CD4-positive, alpha-beta memory T cell (primary cell): ENCODE measurements at regions of chr7 and their contacts with region 1.

Region 1: GRCh38 chr7:75914730-75915585 is at the start of gene POR:
- DNase-seq: peak; percentile 94 to 100 (median 98)
- H3K4me3 ChIP-seq: peak within 1 kb of the TSS; percentile 79 to 81
- H3K4me3 Mint-ChIP-seq: peak within 1 kb of the TSS; percentile 91 to 95 (median 94)
- H3K27ac ChIP-seq: peak within 1 kb of the TSS; percentile 97
- H3K27ac Mint-ChIP-seq: peak within 1 kb of the TSS; percentile 92 to 98 (median 97)
- H3K4me1 ChIP-seq: peaks cover 34% of the 10 kb centered on the region
- H3K4me1 Mint-ChIP-seq: peaks cover 21 to 46% (median 35%) of the 10 kb centered on the region in 4 donors
- H3K27me3 ChIP-seq: no peaks in the 10 kb centered on the region
- H3K27me3 Mint-ChIP-seq: no peaks in the 10 kb centered on the region
- total RNA-seq, gene POR: 60.2 to 71.1 TPM

Region 2: GRCh38 chr7:75835688-75836285 is 79.2 kb before region 1 on chr7:
- CTCF ChIA-PET with region 1: no interaction called
- POLR2A ChIA-PET with region 1: no interaction called
- intact Hi-C with region 1: no loop called
- DNase-seq: no peak
- H3K4me3 ChIP-seq: no peak overlapping the region
- H3K4me3 Mint-ChIP-seq: no peak overlapping the region
- H3K27ac ChIP-seq: no peak overlapping the region
- H3K27ac Mint-ChIP-seq: no peak overlapping the region
- H3K4me1 ChIP-seq: no peaks in the 10 kb centered on the region
- H3K4me1 Mint-ChIP-seq: no peaks in the 10 kb centered on the region
- H3K27me3 ChIP-seq: no peaks in the 10 kb centered on the region
- H3K27me3 Mint-ChIP-seq: peaks cover 0 to 1% of the 10 kb centered on the region in 2 donors

Region 3: DNA sequence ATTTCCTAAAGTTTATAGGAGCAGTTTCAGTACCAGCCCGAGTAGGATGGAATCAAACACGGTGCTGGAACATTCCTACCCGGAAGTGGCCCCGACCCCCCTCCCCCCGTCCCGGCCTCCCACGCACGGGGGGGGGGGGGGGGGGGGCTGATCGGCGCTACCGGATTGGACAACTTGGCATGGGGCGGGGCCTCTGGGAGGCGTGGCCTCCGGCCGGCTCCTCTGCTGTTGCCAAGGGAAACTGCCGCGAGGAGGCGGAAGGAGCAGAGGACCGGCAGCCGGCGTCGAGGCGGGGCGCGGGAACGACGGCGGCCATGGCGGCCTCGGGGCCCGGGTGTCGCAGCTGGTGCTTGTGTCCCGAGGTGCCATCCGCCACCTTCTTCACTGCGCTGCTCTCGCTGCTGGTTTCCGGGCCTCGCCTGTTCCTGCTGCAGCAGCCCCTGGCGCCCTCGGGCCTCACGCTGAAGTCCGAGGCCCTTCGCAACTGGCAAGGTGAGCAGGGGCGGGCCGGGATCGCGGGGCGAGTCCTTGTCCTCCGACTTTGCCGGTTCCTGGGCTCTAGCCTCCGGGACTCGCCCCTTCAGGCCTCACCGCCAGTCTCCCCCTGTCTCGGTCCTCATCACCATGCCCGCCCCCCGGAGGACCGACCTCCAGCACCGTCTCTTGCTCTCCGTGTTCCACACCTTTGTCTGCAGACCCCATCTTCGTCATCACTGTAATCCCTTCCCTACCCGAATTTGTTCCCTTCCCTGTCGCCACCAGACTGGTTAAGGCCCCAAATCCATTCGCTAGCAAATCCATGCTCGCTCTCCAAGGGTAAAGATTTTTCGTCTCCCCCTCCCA is 36.0 kb before region 1 on chr7 and contains the start of gene RHBDD2:
- CTCF ChIA-PET with region 1: interaction called, 3 read pairs
- POLR2A ChIA-PET with region 1: interaction called, 62 read pairs
- intact Hi-C with region 1: loop called (anchors 1 kb)
- DNase-seq: peak; percentile 90 to 96 (median 93)
- H3K4me3 ChIP-seq: peak within 1 kb of the TSS; percentile 89 to 94
- H3K4me3 Mint-ChIP-seq: peak within 1 kb of the TSS; percentile 91 to 99 (median 98)
- H3K27ac ChIP-seq: peak within 1 kb of the TSS; percentile 91
- H3K27ac Mint-ChIP-seq: peak within 1 kb of the TSS; percentile 96 to 100 (median 98)
- H3K4me1 ChIP-seq: peaks cover 25% of the 10 kb centered on the region
- H3K4me1 Mint-ChIP-seq: peaks cover 23 to 39% (median 32%) of the 10 kb centered on the region in 4 donors
- H3K27me3 ChIP-seq: no peaks in the 10 kb centered on the region
- H3K27me3 Mint-ChIP-seq: no peaks in the 10 kb centered on the region
- total RNA-seq, gene RHBDD2: 47.1 to 53.2 TPM

Region 4: DNA sequence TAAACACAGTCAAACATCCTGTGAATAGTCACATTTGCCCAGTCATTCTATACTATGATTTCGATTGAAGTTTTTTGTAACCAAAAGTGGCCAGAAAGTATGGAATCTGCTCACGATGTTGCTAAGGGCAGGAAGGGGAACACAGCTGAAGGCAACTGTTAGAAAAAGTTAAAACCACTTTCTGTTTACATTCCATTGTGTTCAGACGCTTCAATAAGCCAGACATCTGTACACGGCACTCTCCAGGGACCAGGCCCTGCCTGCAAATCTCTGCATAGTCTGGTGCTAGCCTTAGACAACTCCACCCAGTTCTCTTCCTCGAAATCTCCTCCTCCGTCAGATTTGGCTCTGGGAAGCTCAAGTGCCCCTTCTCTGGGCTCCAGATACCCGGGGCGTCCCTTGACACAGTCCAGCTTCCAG is 96.5 kb after region 1 on chr7:
- CTCF ChIA-PET with region 1: no interaction called
- POLR2A ChIA-PET with region 1: interaction called, 26 read pairs
- intact Hi-C with region 1: no loop called
- DNase-seq: no peak
- H3K4me3 ChIP-seq: no peak overlapping the region
- H3K4me3 Mint-ChIP-seq: peak overlapping the region in 2 of 8 donors; percentile 30 to 35
- H3K27ac ChIP-seq: no peak overlapping the region
- H3K27ac Mint-ChIP-seq: no peak overlapping the region
- H3K4me1 ChIP-seq: peaks cover 29% of the 10 kb centered on the region
- H3K4me1 Mint-ChIP-seq: peaks cover 24 to 35% (median 30%) of the 10 kb centered on the region in 4 donors
- H3K27me3 ChIP-seq: no peaks in the 10 kb centered on the region
- H3K27me3 Mint-ChIP-seq: no peaks in the 10 kb centered on the region

Region 5: GRCh38 chr7:76047811-76048667 is 133.1 kb after region 1 on chr7 and contains the starts of genes MDH2 and STYXL1:
- CTCF ChIA-PET with region 1: interaction called, 3 read pairs
- POLR2A ChIA-PET with region 1: interaction called, 24 read pairs
- intact Hi-C with region 1: no loop called
- DNase-seq: peak; percentile 81 to 88 (median 83)
- H3K4me3 ChIP-seq: peak within 1 kb of the TSS; percentile 42 to 92
- H3K4me3 Mint-ChIP-seq: peak within 1 kb of the TSS; percentile 95 to 99 (median 98)
- H3K27ac ChIP-seq: peak within 1 kb of the TSS; percentile 92
- H3K27ac Mint-ChIP-seq: peak within 1 kb of the TSS; percentile 91 to 98 (median 98)
- H3K4me1 ChIP-seq: peaks cover 44% of the 10 kb centered on the region
- H3K4me1 Mint-ChIP-seq: peaks cover 36 to 71% (median 48%) of the 10 kb centered on the region in 4 donors
- H3K27me3 ChIP-seq: no peaks in the 10 kb centered on the region
- H3K27me3 Mint-ChIP-seq: no peaks in the 10 kb centered on the region
- total RNA-seq, gene MDH2: 79.8 to 80.1 TPM
- total RNA-seq, gene STYXL1: 18.9 to 23.9 TPM